ENCODE measurements at regions of chr1 and their contacts with region 1.

Region 1: DNA sequence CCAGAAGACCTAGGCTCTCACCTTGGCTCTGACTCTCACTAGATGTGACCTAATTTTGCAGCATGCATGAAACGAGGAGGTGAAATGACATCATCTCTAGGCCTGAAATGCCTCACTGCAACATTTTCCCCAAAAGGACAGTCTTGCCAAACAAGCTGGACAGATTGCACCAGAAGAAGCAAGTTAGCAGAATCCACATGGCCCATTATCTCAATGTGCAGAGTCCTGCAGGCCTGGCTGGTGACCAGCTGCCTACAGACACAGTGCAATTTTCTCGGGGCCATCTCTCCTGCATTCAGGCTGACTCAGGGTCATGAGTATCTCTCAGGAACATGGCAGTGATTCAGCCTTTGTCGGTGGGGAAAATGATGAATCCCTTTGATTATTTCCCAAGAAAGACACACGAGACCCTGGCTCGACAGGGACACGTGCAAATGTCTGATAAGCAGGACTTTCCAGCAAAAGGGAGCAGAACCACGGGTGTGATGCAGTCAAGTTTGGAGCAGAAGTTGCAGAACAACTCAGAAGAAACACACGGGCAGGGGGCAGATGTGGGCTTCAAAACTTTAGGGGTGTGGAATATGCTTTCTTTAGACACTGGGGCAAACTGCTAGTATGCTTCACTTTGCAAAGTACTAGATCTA is 38.7 kb downstream of the TRIM67 start:
- DNase-seq: no peak
- ATAC-seq: no peak
- H3K4me3 ChIP-seq: no peak overlapping the region
- H3K27ac ChIP-seq: no peak overlapping the region
- H3K4me1 ChIP-seq: no peaks in the 10 kb centered on the region
- H3K27me3 ChIP-seq: peaks cover 0 to 23% (median 8%) of the 10 kb centered on the region in 7 donors
- CTCF ChIP-seq: no peak

Region 2: GRCh38 chr1:231016234-231016633 is 184.3 kb before region 1 on chr1:
- intact Hi-C with region 1: loop called in 2 of 10 experiments (anchors 10 kb)
- DNase-seq: no peak
- ATAC-seq: no peak
- H3K4me3 ChIP-seq: no peak overlapping the region
- H3K27ac ChIP-seq: no peak overlapping the region
- H3K4me1 ChIP-seq: peaks cover 0 to 17% (median 7%) of the 10 kb centered on the region in 9 donors
- H3K27me3 ChIP-seq: no peaks in the 10 kb centered on the region
- CTCF ChIP-seq: no peak

Region 3: DNA sequence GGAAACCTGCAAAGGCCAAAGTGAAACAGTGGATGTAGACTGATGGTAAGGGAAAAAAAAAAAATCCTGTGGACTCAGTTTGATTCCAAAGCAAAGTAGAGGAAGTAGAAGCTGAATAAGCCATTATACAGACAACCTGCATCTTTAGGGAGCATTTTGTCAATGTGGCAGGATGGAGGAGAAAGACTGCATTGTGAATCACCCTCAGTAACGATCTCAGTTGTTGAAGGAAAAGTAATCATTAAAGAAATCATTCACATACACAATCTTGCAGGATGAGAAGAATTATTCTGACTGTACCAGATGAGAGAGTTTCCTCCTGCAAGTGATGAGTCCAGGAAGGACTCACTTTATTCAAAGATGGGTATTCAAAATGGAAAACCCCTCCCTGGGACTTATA is 83.8 kb before region 1 on chr1:
- intact Hi-C with region 1: no loop called
- DNase-seq: no peak
- ATAC-seq: no peak
- H3K4me3 ChIP-seq: no peak overlapping the region
- H3K27ac ChIP-seq: no peak overlapping the region
- H3K4me1 ChIP-seq: no peaks in the 10 kb centered on the region
- H3K27me3 ChIP-seq: peaks cover 0 to 7% (median 0%) of the 10 kb centered on the region in 7 donors
- CTCF ChIP-seq: no peak

Region 4: GRCh38 chr1:231147916-231148315 is 52.6 kb before region 1 on chr1:
- intact Hi-C with region 1: loop called in 1 of 10 experiments (anchors 2 kb)
- DNase-seq: no peak
- ATAC-seq: no peak
- H3K4me3 ChIP-seq: no peak overlapping the region
- H3K27ac ChIP-seq: no peak overlapping the region
- H3K4me1 ChIP-seq: no peaks in the 10 kb centered on the region
- H3K27me3 ChIP-seq: peaks cover 0 to 7% (median 0%) of the 10 kb centered on the region in 7 donors
- CTCF ChIP-seq: no peak